ENCODE measurements at regions of chr3 and their contacts with region 1.

Region 1: GRCh38 chr3:185558395-185558794 is 6.0 kb upstream of the LIPH start:
- DNase-seq: no peak
- H3K4me3 ChIP-seq: no peak overlapping the region
- H3K27ac ChIP-seq: no peak overlapping the region
- H3K4me1 ChIP-seq: no peaks in the 10 kb centered on the region
- CTCF ChIP-seq: no peak

Region 2: DNA sequence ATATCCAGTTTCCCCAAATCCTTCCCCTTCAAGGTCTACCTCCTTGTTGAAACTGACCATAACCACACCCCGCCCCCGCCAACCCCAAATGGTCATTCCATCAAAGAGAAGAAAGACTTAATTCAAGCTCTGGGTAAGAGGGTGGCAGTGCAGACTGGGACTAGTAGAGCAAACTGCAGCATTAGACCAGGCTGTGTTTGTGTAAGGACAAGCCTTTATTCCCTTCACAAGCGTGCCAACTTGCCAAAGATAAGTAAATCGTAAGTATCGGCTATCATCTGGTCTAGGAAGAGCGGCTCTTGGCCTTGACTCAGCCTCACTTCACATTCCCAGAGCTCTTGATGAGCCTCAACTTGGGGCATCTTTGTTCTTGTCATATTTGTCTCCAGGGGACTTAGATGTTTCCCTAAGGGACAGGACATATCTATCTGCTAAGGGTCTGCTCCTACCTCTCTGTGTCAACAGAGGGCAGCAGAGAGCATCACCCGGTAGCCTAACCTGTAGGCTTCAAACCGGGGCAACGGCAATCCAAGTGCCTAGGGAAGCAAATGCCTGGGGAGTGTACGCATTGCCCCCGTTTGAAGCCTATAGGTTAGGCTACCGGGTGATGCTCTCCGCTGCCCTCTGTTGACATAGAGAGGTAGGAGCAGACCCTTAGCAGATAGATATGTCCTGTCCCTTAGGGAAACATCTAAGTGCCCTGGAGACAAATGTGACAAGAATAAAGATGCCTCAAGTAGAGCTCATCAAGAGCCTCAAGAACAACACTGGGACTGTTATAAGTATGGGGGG is 204.4 kb before region 1 on chr3:
- CTCF ChIA-PET with region 1: no interaction called
- POLR2A ChIA-PET with region 1: no interaction called
- intact Hi-C with region 1: loop called (anchors 5 kb)
- DNase-seq: peak; percentile 84
- H3K4me3 ChIP-seq: no peak overlapping the region
- H3K27ac ChIP-seq: no peak overlapping the region
- H3K4me1 ChIP-seq: no peaks in the 10 kb centered on the region
- CTCF ChIP-seq: peak; percentile 74